ENCODE measurements at regions of chr7 and their contacts with region 1.

Region 1: DNA sequence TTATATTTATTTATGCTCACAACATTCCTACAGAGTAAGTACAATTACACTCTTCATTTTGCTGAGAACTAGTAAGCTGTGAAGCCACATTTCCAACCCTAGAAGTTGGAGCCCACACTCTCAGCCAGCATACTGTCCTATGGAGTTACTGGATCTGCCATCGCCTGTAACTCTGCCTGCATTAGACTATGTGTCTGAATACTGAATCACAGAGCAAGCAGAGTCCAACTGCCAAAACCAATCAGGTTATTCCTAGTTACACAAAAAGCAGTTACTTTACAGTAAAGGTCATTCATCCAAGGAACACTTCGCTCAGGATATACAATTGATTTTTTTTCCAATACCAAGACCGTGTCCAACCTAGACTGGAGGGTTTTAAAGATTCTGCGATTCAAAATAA is 21.5 kb downstream of the CTAGE6 start:
- DNase-seq: no peak
- H3K4me3 Mint-ChIP-seq: no peak overlapping the region
- H3K27ac Mint-ChIP-seq: no peak overlapping the region
- H3K4me1 Mint-ChIP-seq: no peaks in the 10 kb centered on the region
- H3K27me3 Mint-ChIP-seq: no peaks in the 10 kb centered on the region
- CTCF ChIP-seq: no peak

Region 2: DNA sequence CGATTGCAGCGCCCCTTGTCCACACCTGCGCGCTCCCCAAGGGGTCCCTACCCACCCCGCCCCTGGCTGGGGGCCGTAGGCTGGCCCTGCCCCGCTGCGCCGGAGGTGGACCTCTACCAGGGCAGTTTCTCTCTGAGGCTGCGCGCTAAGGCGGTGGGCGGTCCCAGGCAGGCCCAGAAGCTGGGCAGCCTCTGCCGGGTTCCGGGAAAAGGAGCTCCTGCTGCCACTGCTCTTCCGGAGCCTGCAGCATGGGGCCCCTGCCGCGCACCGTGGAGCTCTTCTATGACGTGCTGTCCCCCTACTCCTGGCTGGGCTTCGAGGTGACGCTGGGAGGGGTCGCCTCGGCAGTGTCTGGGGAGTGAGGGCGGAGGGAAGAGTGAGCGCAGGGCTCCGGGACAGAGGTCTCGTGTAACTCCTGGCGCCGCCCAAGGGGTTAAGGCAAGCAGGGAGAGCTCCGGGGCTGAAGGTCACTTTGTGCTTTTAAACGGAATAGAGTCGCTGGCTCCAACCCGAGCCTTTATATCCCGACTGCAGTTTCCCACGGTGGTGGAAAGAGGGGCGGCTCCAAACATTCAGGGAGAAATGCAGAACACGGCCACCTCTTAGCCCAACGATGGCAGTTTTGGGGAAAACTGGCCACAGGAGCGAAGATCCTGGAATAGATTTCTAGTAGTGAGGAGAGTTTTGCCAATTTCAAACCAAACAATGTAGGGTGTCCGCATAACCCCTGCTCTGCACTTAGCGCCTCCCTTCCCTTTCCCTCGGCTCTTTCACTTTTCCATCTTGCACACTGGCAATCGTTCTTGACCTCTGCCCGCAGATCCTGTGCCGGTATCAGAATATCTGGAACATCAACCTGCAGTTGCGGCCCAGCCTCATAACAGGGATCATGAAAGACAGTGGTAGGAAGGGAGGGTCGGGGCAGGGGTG is 472.4 kb before region 1 on chr7 and contains the start of gene GSTK1:
- CTCF ChIA-PET with region 1: no interaction called
- POLR2A ChIA-PET with region 1: no interaction called
- intact Hi-C with region 1: no loop called
- DNase-seq: peak; percentile 77
- H3K4me3 Mint-ChIP-seq: peak within 1 kb of the TSS; percentile 98
- H3K27ac Mint-ChIP-seq: peak within 1 kb of the TSS; percentile 92
- H3K4me1 Mint-ChIP-seq: peaks cover 29% of the 10 kb centered on the region
- H3K27me3 Mint-ChIP-seq: no peaks in the 10 kb centered on the region
- CTCF ChIP-seq: no peak
- total RNA-seq, gene GSTK1: 69.7 and 79.9 TPM in 2 replicates

Region 3: GRCh38 chr7:143882611-143883078 is 146.7 kb after region 1 on chr7:
- CTCF ChIA-PET with region 1: no interaction called
- POLR2A ChIA-PET with region 1: no interaction called
- intact Hi-C with region 1: no loop called
- DNase-seq: no peak
- H3K4me3 Mint-ChIP-seq: no peak overlapping the region
- H3K27ac Mint-ChIP-seq: no peak overlapping the region
- H3K4me1 Mint-ChIP-seq: no peaks in the 10 kb centered on the region
- H3K27me3 Mint-ChIP-seq: no peaks in the 10 kb centered on the region
- CTCF ChIP-seq: no peak

Region 4: GRCh38 chr7:144011458-144012230 is 275.7 kb after region 1 on chr7:
- CTCF ChIA-PET with region 1: interaction called, 19 read pairs
- POLR2A ChIA-PET with region 1: no interaction called
- intact Hi-C with region 1: no loop called
- DNase-seq: no peak
- H3K4me3 Mint-ChIP-seq: no peak overlapping the region
- H3K27ac Mint-ChIP-seq: no peak overlapping the region
- H3K4me1 Mint-ChIP-seq: no peaks in the 10 kb centered on the region
- H3K27me3 Mint-ChIP-seq: no peaks in the 10 kb centered on the region
- CTCF ChIP-seq: peak; percentile 34